ENCODE measurements at regions of chr6 and their contacts with region 1.

Region 1: DNA sequence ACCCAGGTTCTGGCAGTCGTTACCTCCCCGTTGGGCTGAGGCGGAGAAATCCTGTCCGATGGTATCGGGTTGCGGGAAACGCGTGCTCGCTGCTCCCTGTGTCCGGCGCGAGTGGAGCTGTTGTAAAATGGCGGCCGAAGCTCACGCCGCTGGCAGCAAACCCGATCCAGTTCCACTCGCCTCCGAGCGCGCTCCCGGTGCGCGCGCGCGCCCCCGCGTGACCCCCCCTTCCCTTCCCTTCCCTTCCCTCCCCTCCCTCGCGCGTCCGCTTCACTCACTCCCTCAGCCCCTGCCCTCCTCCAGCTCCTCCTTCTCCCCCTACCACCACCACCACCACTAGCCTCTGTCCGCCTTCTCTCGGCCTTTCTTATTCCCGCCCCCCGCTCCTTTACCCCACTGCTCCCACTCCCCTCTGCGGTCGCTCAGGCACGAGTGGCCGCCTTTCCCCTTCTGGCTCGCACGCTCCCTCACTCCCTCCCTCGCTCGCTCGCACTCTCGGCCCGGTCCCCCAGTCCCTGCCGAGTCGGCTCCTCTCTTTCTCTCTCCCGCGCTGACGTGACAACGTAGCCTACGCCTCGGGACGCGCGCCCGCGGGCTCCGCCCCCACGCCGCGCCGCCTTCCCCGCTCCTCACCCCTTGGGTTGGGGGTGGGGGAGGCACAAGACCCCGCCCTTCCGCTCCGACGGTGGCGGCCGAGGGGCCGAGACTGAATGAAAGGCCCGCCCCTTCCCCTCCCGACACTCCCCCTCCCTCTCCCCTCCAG is at the start of gene SYNCRIP:
- DNase-seq: peak; percentile 98
- H3K4me3 Mint-ChIP-seq: peak within 1 kb of the TSS; percentile 86
- H3K27ac Mint-ChIP-seq: peak within 1 kb of the TSS; percentile 98
- H3K4me1 Mint-ChIP-seq: peaks cover 39% of the 10 kb centered on the region
- H3K27me3 Mint-ChIP-seq: no peaks in the 10 kb centered on the region
- total RNA-seq, gene SYNCRIP: 138 to 139 TPM

Region 2: DNA sequence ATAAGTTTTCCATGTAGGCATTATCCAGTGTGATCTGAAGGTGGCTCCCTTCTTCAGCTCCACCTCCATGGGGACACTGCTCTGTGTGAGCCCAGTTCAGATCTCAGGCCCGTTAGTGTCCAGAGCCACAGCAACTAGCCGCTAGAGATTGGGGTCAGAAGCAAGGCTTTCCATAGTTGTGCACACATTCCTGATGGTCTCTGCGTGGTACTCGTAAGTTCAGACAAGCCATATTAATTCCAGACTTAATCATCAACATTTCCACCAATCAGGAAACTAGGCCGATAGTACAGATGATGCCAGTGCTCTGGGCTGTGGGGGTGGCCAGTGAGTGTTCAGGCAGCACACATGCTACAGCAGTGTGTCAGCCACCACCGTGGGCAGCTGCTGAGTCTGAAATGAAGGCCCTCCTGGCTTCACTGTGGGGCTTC is 17.2 kb after region 1 on chr6:
- CTCF ChIA-PET with region 1: no interaction called
- POLR2A ChIA-PET with region 1: no interaction called
- intact Hi-C with region 1: no loop called
- DNase-seq: no peak
- H3K4me3 Mint-ChIP-seq: no peak overlapping the region
- H3K27ac Mint-ChIP-seq: no peak overlapping the region
- H3K4me1 Mint-ChIP-seq: no peaks in the 10 kb centered on the region
- H3K27me3 Mint-ChIP-seq: no peaks in the 10 kb centered on the region

Region 3: GRCh38 chr6:85678602-85679444 is 35.9 kb after region 1 on chr6:
- CTCF ChIA-PET with region 1: interaction called, 34 read pairs
- POLR2A ChIA-PET with region 1: interaction called, 668 read pairs
- intact Hi-C with region 1: loop called (anchors 1 kb)
- DNase-seq: peak; percentile 98
- H3K4me3 Mint-ChIP-seq: peak overlapping the region; percentile 95
- H3K27ac Mint-ChIP-seq: peak overlapping the region; percentile 90
- H3K4me1 Mint-ChIP-seq: peaks cover 34% of the 10 kb centered on the region
- H3K27me3 Mint-ChIP-seq: no peaks in the 10 kb centered on the region

Measured in activated CD4-positive, alpha-beta memory T cell treated with anti-CD3 and anti-CD28 coated beads for 36 hours (primary cell).